ENCODE measurements at regions of chr12 and their contacts with region 1.

Region 1: GRCh38 chr12:109833307-109834189 is at the start of gene TRPV4:
- DNase-seq: no peak
- H3K4me3 ChIP-seq: no peak within 1 kb of the TSS; the same call in 1 of the 2 replicates
- H3K27ac ChIP-seq: no peak within 1 kb of the TSS
- H3K4me1 ChIP-seq: peaks cover 17% of the 10 kb centered on the region
- H3K27me3 ChIP-seq: no peaks in the 10 kb centered on the region
- CTCF ChIP-seq: no peak
- total RNA-seq, gene TRPV4: 3.1 and 3.2 TPM in 2 replicates

Region 2: DNA sequence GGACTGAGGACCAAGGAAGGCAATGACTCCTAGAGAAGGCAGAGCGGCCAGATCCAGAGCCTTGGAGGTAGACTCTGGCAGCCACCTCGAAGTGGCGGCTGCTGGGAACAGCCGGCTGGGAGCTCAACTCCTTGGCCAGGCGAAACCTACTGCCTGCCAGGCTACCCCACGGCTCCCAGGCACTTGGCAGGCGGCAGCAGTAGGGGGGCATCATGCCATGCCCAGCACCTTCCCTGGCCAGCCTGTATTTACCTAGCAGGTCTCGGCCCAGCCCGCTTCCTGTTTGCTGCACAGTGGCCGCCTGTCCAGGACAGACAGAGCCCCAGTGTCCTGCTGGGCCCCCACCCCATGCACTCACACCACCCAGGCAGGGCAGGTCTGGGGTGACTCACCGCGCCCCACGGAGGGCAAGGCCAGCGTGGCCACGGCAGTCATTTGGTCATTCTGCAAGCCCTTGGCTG is 10.6 kb before region 1 on chr12:
- CTCF ChIA-PET with region 1: interaction called, 11 read pairs
- POLR2A ChIA-PET with region 1: no interaction called
- intact Hi-C with region 1: no loop called
- DNase-seq: peak; percentile 41 to 79
- H3K4me3 ChIP-seq: no peak overlapping the region
- H3K27ac ChIP-seq: no peak overlapping the region
- H3K4me1 ChIP-seq: peaks cover 26% of the 10 kb centered on the region
- H3K27me3 ChIP-seq: no peaks in the 10 kb centered on the region
- CTCF ChIP-seq: no peak